ENCODE measurements at regions of chr12 and their contacts with region 1.

Region 1: GRCh38 chr12:112924986-112925385 is 13.3 kb upstream of the OAS3 start:
- DNase-seq: no peak
- ATAC-seq: peak; percentile 64
- H3K4me3 Mint-ChIP-seq: peak overlapping the region; percentile 28
- H3K27ac Mint-ChIP-seq: peak overlapping the region; percentile 73
- H3K4me1 Mint-ChIP-seq: peaks cover 46% of the 10 kb centered on the region
- H3K27me3 Mint-ChIP-seq: no peaks in the 10 kb centered on the region
- CTCF ChIP-seq: no peak

Region 2: GRCh38 chr12:112906712-112907414 is 18.1 kb before region 1 on chr12 and contains the start of gene OAS1:
- CTCF ChIA-PET with region 1: no interaction called
- POLR2A ChIA-PET with region 1: interaction called, 16 read pairs
- intact Hi-C with region 1: loop called (anchors 2 kb)
- DNase-seq: no peak
- ATAC-seq: peak; percentile 80
- H3K4me3 Mint-ChIP-seq: peak within 1 kb of the TSS; percentile 88
- H3K27ac Mint-ChIP-seq: peak within 1 kb of the TSS; percentile 92
- H3K4me1 Mint-ChIP-seq: peaks cover 88% of the 10 kb centered on the region
- H3K27me3 Mint-ChIP-seq: no peaks in the 10 kb centered on the region
- CTCF ChIP-seq: no peak
- total RNA-seq, gene OAS1: 27.8 and 30.6 TPM in 2 replicates

Measured in activated B cell treated with CpG ODN at 0.5 μM for 24 hours (primary cell).